GM10248 (cell line): ENCODE measurements at regions of chr1 and their contacts with region 1.

Region 1: DNA sequence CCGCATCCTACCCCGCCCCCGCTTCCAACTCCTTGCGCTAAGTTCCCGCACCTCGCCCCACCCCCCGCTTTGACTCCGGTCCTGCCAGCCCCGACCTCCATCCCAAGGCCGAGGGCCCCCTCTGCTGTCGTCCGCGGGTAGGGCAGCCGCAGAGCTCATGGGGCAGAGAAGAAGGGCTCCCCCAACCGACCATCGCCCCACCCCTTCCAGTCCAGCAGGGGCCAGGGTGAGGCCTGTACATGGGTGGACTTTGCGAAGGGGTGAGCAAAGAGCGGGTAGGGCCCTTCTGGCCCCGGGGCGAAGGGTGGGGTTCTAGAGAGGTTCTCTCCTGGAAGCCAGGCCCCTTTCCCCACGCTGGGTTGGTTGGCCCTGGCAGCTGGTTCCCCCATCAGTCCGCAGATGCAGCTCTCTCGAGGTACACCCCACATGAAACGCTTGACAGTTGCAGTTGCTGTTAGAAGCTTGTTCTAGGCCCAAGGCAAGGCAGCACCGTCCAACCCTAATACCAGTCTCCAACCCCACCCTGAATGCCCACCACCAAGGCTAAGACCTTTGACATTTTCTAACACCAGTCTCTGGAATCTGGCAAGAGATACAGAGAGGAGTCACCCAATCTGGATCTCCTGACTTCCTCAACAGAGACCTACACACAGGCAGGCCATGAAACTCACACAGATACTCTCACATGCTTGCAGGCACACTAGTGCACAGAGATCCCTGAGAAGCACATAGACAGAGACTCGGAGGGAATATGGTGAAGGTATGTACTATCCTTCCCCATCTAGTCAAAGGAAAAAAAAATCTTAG is 25.3 kb upstream of the ADGRB2 start:
- DNase-seq: peak; percentile 97
- CTCF ChIP-seq: peak; percentile 99

Region 2: DNA sequence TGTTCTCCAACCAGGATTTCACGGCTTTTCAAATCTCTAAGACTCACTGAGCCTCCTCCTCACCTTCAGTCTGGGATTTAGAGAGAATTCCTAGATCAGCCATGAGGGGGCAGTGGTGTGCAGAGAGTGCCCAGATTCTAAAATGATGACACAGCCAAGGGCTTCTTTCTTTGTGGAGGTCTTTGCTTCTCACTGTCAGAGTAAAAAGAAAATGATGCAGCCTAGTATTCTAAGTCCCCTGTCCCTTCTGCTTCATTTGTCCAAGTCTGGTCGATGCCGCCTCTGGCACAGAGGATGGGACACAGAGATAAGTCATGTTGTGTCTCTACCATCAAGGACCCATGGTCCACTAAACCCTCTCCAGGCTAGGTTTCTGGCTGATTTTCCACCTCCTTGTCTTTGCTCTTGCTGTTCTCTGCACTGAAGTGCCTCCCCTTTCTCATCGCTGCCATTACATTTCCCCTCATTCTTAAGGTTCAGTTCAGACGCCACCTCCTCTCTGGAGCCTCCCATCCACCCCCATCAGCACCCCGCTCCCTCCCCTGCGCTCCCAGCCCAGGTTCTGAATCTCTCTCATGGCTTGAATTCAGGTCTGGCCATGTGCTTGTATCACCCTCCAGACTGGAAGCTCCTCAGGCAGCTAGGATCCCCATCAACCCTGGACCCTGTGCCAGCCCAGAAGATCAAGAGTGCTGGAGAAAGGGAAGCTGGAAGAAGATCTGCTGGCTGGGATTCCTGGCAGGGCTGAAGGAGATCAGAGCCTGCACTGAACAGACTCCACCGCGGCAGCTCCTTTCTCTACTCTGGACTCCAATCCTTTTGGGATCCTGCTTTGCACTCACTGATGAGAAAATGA is 225.1 kb before region 1 on chr1:
- CTCF ChIA-PET with region 1: interaction called, 15 read pairs
- POLR2A ChIA-PET with region 1: no interaction called
- DNase-seq: peak; percentile 78
- CTCF ChIP-seq: peak; percentile 79

Region 3: GRCh38 chr1:31715087-31715872 is 74.2 kb before region 1 on chr1:
- CTCF ChIA-PET with region 1: interaction called, 14 read pairs
- POLR2A ChIA-PET with region 1: no interaction called
- DNase-seq: peak; percentile 74
- CTCF ChIP-seq: peak; percentile 57

Region 4: GRCh38 chr1:31762726-31763670 is 26.5 kb before region 1 on chr1:
- CTCF ChIA-PET with region 1: interaction called, 44 read pairs
- POLR2A ChIA-PET with region 1: interaction called, 5 read pairs
- DNase-seq: peak; percentile 66
- CTCF ChIP-seq: peak; percentile 43

Region 5: GRCh38 chr1:31805318-31805717 is 15.9 kb after region 1 on chr1:
- CTCF ChIA-PET with region 1: interaction called, 30 read pairs
- POLR2A ChIA-PET with region 1: no interaction called
- DNase-seq: no peak
- CTCF ChIP-seq: no peak

Region 6: GRCh38 chr1:31920956-31921355 is 131.5 kb after region 1 on chr1:
- CTCF ChIA-PET with region 1: no interaction called
- POLR2A ChIA-PET with region 1: no interaction called
- DNase-seq: no peak
- CTCF ChIP-seq: no peak

Region 7: GRCh38 chr1:31931593-31932225 is 142.2 kb after region 1 on chr1:
- CTCF ChIA-PET with region 1: no interaction called
- POLR2A ChIA-PET with region 1: no interaction called
- DNase-seq: no peak
- CTCF ChIP-seq: no peak